Heart right ventricle (tissue), 16 donors: ENCODE measurements at regions of chr17 and their contacts with region 1.

Region 1: GRCh38 chr17:57226793-57227192 is 29.5 kb upstream of the MSI2 start:
- DNase-seq: no peak
- ATAC-seq: no peak
- H3K4me3 ChIP-seq: no peak overlapping the region
- H3K27ac ChIP-seq: no peak overlapping the region
- H3K4me1 ChIP-seq: no peaks in the 10 kb centered on the region
- H3K27me3 ChIP-seq: peaks cover 0 to 6% (median 0%) of the 10 kb centered on the region in 7 donors
- CTCF ChIP-seq: no peak

Region 2: GRCh38 chr17:57284984-57285646 is 58.3 kb after region 1 on chr17:
- intact Hi-C with region 1: loop called in 1 of 10 experiments (anchors 10 kb)
- DNase-seq: no peak
- ATAC-seq: no peak
- H3K4me3 ChIP-seq: no peak overlapping the region
- H3K27ac ChIP-seq: peak overlapping the region in 3 of 10 donors; percentile 1 to 47 (median 15)
- H3K4me1 ChIP-seq: peaks cover 8 to 78% (median 62%) of the 10 kb centered on the region in 9 donors
- H3K27me3 ChIP-seq: no peaks in the 10 kb centered on the region
- CTCF ChIP-seq: no peak

Region 3: DNA sequence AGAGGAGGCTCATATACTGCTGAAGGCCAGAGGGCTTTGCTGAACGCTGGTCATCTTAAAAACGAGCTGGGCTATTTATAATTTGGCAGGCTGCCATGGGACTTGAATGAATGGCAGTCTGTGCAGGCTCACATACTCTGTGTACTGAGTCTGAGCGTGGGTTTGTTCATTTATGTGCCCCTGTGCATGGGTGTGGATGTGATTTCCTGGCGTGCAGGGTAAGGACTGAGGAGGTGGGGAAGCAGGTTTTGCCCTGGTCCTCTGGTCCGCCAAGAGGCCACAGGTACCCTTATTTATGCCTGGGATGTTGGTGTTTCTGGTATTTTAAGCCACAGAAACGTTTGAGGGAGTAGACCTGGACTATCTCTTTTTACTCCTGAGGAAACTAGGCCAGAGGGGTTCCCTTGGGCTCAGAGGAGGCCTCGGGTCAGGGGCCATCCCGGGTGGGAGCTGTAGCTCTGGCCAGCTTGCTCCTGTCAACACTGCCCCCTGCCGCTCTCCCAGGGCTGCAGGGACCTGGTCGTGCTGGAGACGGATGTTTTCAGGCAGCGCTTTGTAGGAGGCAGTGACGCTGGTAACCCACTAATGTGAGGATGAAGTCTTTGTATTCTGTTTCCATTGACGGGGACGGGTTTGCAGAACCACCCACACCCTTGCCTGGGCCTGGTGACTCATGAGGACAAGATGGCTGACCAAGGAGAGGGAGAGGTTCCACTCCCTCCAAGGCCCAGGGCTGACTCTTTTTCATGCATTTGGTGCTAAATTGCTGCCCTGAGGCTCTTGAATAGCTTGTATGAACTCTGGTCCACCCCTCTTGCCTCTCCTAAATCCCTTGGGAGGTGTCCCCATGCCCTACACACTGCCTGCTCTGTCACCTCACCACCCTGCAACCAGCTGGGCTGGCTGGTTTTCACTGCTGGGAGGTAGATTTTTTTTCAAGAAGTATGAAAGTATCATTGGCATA is 214.0 kb after region 1 on chr17:
- intact Hi-C with region 1: no loop called
- DNase-seq: peak; percentile 72 to 88
- ATAC-seq: peak; percentile 78 to 89 (median 84)
- H3K4me3 ChIP-seq: no peak overlapping the region
- H3K27ac ChIP-seq: peak overlapping the region; percentile 42 to 83 (median 67)
- H3K4me1 ChIP-seq: peaks cover 23 to 91% (median 61%) of the 10 kb centered on the region in 9 donors
- H3K27me3 ChIP-seq: no peaks in the 10 kb centered on the region
- CTCF ChIP-seq: peak in 8 of 9 donors; percentile 30 to 79 (median 64)